Vagina (tissue), 2 donors: ENCODE measurements at regions of chr5 and their contacts with region 1.

Region 1: GRCh38 chr5:172870291-172870714 is 36.3 kb downstream of the ERGIC1 start:
- DNase-seq: no peak
- H3K4me3 ChIP-seq: no peak overlapping the region
- H3K27ac ChIP-seq: peak overlapping the region; percentile 97
- H3K4me1 ChIP-seq: peaks cover 99% of the 10 kb centered on the region
- H3K27me3 ChIP-seq: no peaks in the 10 kb centered on the region
- CTCF ChIP-seq: no peak
- POLR2A ChIP-seq: no peak

Region 2: DNA sequence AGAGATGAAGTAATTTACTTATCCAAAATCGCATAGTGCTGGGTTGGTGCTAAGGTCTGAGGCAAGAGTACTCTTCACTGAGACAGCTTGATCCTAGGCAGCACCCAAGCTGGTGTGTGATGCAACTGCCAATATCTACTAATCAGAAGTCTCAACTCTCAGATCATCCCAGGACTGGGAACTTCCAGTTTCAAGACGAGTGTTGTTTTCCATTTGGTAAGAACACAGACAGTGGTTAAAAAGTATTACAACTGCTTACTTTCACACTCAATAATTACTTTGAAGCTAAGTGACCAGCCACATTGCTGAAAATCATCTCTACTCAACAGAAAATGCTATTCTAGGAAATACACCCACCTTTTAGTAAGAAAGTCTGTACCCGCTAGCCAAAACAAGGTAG is 909.2 kb before region 1 on chr5:
- intact Hi-C with region 1: no loop called
- DNase-seq: no peak
- H3K4me3 ChIP-seq: no peak overlapping the region
- H3K27ac ChIP-seq: no peak overlapping the region
- H3K4me1 ChIP-seq: peaks cover 71% of the 10 kb centered on the region
- H3K27me3 ChIP-seq: no peaks in the 10 kb centered on the region
- CTCF ChIP-seq: no peak
- POLR2A ChIP-seq: no peak

Region 3: DNA sequence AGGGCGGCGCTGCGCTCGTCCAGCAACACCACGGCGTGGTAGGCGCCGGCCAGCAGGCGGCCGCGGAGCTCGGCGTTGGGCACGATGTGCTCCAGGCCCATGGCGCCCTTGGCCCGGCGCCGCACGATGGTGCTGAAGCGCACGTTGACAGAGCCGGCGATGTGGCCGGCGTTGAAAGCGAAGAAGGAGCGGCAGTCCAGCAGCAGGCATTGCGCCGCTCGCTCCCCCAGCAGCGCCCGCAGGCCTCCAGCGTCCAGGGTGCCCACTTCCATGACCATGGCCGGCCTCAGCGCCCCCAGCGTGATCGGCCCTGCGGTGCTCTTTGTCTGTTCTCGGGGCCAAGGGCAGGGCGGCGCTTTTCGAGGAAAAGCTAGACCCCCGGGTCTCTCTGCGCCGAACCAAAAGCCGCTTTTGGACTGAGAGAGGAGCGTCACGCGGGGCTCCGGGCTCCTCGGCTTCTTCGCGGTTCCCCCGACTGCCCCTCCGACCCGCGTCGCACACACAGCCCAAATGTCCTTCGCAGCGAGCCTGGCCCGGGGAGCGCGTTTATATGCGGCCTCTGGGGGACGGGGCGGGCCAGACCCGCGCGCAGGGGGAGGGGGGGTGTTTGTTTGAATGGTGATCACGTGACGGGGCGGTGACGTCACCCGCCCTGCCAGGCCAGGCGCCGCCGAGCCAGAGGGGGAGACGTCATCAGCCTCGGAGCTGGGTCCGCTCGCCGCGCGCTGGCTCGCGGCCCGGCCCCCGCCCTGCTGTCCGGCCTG is 99.4 kb before region 1 on chr5 and contains the start of gene DUSP1:
- intact Hi-C with region 1: loop called (anchors 5 kb)
- DNase-seq: no peak
- H3K4me3 ChIP-seq: peak within 1 kb of the TSS; percentile 91 to 99
- H3K27ac ChIP-seq: peak within 1 kb of the TSS; percentile 98
- H3K4me1 ChIP-seq: peaks cover 72% of the 10 kb centered on the region
- H3K27me3 ChIP-seq: no peaks in the 10 kb centered on the region
- CTCF ChIP-seq: peak in 1 of 3 experiments; percentile 35
- POLR2A ChIP-seq: peak in 1 of 2 donors; percentile 100
- total RNA-seq, gene DUSP1: 2,876 TPM

Region 4: DNA sequence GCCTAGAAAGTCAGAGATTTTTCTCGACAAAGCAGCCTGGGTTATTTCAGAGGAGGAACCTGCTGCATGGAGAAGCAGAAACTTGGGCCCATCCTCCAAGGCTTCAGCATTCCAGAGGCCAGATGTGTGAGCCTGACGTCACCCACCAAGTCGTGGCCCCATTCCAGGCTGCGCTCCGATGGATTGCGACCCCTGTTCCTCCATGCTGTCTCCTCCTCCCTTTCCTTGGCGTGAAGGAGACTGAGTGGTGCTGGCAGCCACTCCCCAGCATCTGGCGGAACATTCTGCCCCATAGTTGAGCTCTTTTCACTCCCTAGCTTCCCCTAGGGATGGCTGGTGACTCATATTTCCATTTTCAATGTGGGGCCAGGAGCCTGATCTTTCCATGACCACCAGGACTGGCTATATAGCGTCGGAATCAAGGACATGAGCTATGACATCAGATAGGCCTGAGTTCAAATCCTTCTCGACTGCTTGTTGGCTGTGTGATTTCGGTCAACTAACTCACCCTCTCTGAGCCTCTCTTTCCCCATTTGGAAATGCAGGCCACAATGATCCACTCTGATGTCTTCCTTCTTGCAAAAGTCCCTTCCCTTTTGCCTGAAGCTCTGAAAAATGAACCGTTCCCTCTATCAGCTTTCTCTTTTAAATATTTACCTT is 74.9 kb before region 1 on chr5:
- intact Hi-C with region 1: loop called (anchors 5 kb)
- DNase-seq: peak in 1 of 2 donors; percentile 100
- H3K4me3 ChIP-seq: no peak overlapping the region
- H3K27ac ChIP-seq: peak overlapping the region; percentile 92
- H3K4me1 ChIP-seq: peaks cover 65% of the 10 kb centered on the region
- H3K27me3 ChIP-seq: no peaks in the 10 kb centered on the region
- CTCF ChIP-seq: peak in 1 of 3 experiments; percentile 26
- POLR2A ChIP-seq: no peak

Region 5: GRCh38 chr5:172902497-172903200 is 32.3 kb after region 1 on chr5:
- intact Hi-C with region 1: loop called (anchors 2 kb)
- DNase-seq: no peak
- H3K4me3 ChIP-seq: no peak overlapping the region
- H3K27ac ChIP-seq: peak overlapping the region; percentile 95
- H3K4me1 ChIP-seq: peaks cover 95% of the 10 kb centered on the region
- H3K27me3 ChIP-seq: no peaks in the 10 kb centered on the region
- CTCF ChIP-seq: no peak
- POLR2A ChIP-seq: no peak

Region 6: DNA sequence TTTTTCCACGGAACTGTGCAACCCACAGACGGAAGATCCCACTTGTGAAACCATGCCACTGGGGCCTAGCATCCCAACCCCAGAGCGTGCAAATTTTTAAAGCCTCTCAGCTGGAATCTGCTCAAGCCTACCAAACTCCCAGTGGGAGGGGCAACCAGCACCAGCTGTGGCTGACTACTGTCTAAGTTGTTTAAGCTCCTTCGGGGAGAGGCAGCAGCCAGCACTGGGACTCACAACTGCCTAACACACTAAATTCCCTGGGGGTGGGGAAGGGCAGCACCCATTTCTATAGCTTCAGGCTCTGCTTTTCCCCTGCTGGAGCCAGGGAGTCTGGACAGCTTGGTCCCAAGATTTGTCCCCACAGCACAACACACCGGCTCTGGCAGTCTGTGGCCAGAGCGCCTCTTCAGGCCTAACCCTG is 1566.5 kb after region 1 on chr5:
- intact Hi-C with region 1: no loop called
- DNase-seq: peak in 1 of 2 donors; percentile 77
- H3K4me3 ChIP-seq: no peak overlapping the region
- H3K27ac ChIP-seq: no peak overlapping the region
- H3K4me1 ChIP-seq: no peaks in the 10 kb centered on the region
- H3K27me3 ChIP-seq: no peaks in the 10 kb centered on the region
- CTCF ChIP-seq: no peak
- POLR2A ChIP-seq: no peak